MCF 10A (cell line): ENCODE measurements at regions of chr12 and their contacts with region 1.

Region 1: GRCh38 chr12:54749191-54749818 is 101.1 kb upstream of the DCD start:
- DNase-seq: peak; percentile 64
- H3K4me3 Mint-ChIP-seq: no peak overlapping the region
- H3K27ac Mint-ChIP-seq: no peak overlapping the region
- H3K4me1 Mint-ChIP-seq: no peaks in the 10 kb centered on the region
- H3K27me3 Mint-ChIP-seq: peaks cover 45% of the 10 kb centered on the region
- CTCF ChIP-seq: peak; percentile 64

Region 2: GRCh38 chr12:54596526-54596946 is 152.8 kb before region 1 on chr12:
- CTCF ChIA-PET with region 1: interaction called, 16 read pairs
- POLR2A ChIA-PET with region 1: no interaction called
- intact Hi-C with region 1: no loop called
- DNase-seq: peak; percentile 80
- H3K4me3 Mint-ChIP-seq: no peak overlapping the region
- H3K27ac Mint-ChIP-seq: no peak overlapping the region
- H3K4me1 Mint-ChIP-seq: no peaks in the 10 kb centered on the region
- H3K27me3 Mint-ChIP-seq: peaks cover 27% of the 10 kb centered on the region
- CTCF ChIP-seq: peak; percentile 68

Region 3: DNA sequence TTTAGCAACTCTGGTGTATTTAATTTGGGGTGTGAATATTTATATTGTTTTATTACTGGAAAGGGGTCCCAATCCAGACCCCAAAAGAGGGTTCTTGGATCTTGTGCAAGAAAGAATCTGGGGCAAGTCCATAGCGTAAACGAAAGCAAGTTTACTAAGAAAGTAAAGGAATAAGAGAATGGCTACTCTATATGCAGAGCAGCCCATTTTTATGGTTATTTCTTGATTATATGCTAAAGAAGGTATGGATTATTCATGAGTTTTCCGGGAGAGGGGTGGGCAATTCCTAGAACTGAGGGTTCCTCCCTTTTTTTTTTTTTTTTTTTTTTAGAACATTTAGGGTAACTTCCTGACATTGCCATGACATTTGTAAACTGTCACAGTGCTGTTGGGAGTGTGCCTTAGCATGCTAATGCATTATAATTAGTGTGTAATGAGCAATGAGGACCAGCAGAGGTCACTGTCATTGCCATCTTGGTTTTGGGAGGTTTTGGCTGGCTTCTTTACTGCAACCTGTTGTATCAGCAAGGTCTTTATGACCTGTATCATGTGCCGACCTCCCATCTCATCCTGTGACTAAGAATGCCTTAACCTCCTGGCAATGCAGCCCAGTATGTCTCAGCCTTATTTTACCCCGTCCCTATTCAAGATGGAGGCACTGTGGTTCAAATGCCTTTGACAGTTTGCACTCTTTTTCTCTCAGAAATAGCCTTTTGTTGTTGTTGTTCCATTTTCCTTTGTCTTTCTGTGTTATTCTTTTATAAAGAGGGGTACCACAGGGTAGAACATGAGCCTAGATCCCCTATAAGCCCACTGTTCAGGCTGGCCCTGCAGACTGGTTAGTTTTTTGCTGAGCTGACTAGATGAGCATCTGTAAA is 25.7 kb before region 1 on chr12:
- CTCF ChIA-PET with region 1: interaction called, 14 read pairs
- POLR2A ChIA-PET with region 1: no interaction called
- intact Hi-C with region 1: no loop called
- DNase-seq: peak; percentile 60
- H3K4me3 Mint-ChIP-seq: no peak overlapping the region
- H3K27ac Mint-ChIP-seq: no peak overlapping the region
- H3K4me1 Mint-ChIP-seq: no peaks in the 10 kb centered on the region
- H3K27me3 Mint-ChIP-seq: peaks cover 79% of the 10 kb centered on the region
- CTCF ChIP-seq: peak; percentile 45

Region 4: GRCh38 chr12:54759751-54760150 is 10.4 kb after region 1 on chr12:
- CTCF ChIA-PET with region 1: interaction called, 40 read pairs
- POLR2A ChIA-PET with region 1: no interaction called
- intact Hi-C with region 1: no loop called
- DNase-seq: peak; percentile 69
- H3K4me3 Mint-ChIP-seq: no peak overlapping the region
- H3K27ac Mint-ChIP-seq: no peak overlapping the region
- H3K4me1 Mint-ChIP-seq: no peaks in the 10 kb centered on the region
- H3K27me3 Mint-ChIP-seq: peaks cover 55% of the 10 kb centered on the region
- CTCF ChIP-seq: peak; percentile 60

Region 5: GRCh38 chr12:54935235-54935951 is 186.1 kb after region 1 on chr12:
- CTCF ChIA-PET with region 1: interaction called, 30 read pairs
- POLR2A ChIA-PET with region 1: no interaction called
- intact Hi-C with region 1: no loop called
- DNase-seq: peak; percentile 93
- H3K4me3 Mint-ChIP-seq: peak overlapping the region; percentile 7
- H3K27ac Mint-ChIP-seq: peak overlapping the region; percentile 96
- H3K4me1 Mint-ChIP-seq: peaks cover 26% of the 10 kb centered on the region
- H3K27me3 Mint-ChIP-seq: no peaks in the 10 kb centered on the region
- CTCF ChIP-seq: peak; percentile 12

Region 6: GRCh38 chr12:54993161-54993835 is 244.0 kb after region 1 on chr12:
- CTCF ChIA-PET with region 1: interaction called, 11 read pairs
- POLR2A ChIA-PET with region 1: no interaction called
- intact Hi-C with region 1: no loop called
- DNase-seq: peak; percentile 74
- H3K4me3 Mint-ChIP-seq: no peak overlapping the region
- H3K27ac Mint-ChIP-seq: no peak overlapping the region
- H3K4me1 Mint-ChIP-seq: peaks cover 5% of the 10 kb centered on the region
- H3K27me3 Mint-ChIP-seq: peaks cover 76% of the 10 kb centered on the region
- CTCF ChIP-seq: peak; percentile 78